MCF 10A (cell line): ENCODE measurements at regions of chr3 and their contacts with region 1.

Region 1: DNA sequence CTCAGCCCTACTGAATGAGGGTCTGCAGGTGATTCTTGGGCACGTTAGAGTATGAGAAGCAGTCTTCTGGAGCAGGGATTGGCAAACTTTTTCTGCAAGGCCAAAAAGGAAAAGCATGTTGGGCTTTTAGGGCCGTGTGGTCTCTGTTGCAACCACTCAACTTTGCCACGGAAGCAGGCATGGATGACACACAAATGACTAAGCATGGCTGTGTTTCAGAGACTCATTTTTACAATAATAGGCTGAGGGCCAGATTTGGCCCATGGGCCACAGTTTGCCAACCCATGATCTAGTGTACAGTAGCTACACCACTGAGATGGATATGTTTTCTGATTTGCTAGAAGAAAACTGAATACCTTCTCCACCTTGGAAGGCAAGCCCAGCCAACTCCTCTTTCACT is 66.1 kb upstream of the PRICKLE2 start:
- DNase-seq: peak; percentile 97
- H3K4me3 Mint-ChIP-seq: no peak overlapping the region
- H3K27ac Mint-ChIP-seq: peak overlapping the region; percentile 88
- H3K4me1 Mint-ChIP-seq: peaks cover 17% of the 10 kb centered on the region
- H3K27me3 Mint-ChIP-seq: no peaks in the 10 kb centered on the region
- CTCF ChIP-seq: no peak

Region 2: GRCh38 chr3:64187065-64187959 is 104.0 kb before region 1 on chr3:
- CTCF ChIA-PET with region 1: no interaction called
- POLR2A ChIA-PET with region 1: interaction called, 4 read pairs
- intact Hi-C with region 1: loop called (anchors 2 kb)
- DNase-seq: peak; percentile 93
- H3K4me3 Mint-ChIP-seq: peak overlapping the region; percentile 62
- H3K27ac Mint-ChIP-seq: peak overlapping the region; percentile 83
- H3K4me1 Mint-ChIP-seq: peaks cover 66% of the 10 kb centered on the region
- H3K27me3 Mint-ChIP-seq: no peaks in the 10 kb centered on the region
- CTCF ChIP-seq: no peak

Region 3: DNA sequence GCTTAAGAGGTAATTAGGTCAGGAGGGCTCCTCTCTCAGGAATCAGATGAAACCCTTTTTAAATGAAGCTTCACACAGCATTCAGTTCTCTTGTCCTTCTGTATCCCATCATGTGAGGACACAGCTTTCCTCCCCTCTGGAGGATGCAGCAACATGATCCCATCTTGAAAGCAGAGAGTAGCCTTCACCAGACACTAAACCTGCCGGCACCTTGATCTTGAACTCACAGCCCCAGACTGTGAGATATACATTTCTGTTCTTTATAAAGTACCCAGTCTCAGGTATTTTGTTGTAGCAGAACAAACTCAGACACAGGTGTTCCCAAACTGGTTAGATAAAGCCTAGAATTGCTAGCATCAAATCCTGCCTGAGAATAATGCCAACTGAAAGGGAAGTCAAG is 17.6 kb after region 1 on chr3:
- CTCF ChIA-PET with region 1: interaction called, 4 read pairs
- POLR2A ChIA-PET with region 1: interaction called, 11 read pairs
- intact Hi-C with region 1: no loop called
- DNase-seq: no peak
- H3K4me3 Mint-ChIP-seq: no peak overlapping the region
- H3K27ac Mint-ChIP-seq: no peak overlapping the region
- H3K4me1 Mint-ChIP-seq: no peaks in the 10 kb centered on the region
- H3K27me3 Mint-ChIP-seq: no peaks in the 10 kb centered on the region
- CTCF ChIP-seq: no peak

Region 4: DNA sequence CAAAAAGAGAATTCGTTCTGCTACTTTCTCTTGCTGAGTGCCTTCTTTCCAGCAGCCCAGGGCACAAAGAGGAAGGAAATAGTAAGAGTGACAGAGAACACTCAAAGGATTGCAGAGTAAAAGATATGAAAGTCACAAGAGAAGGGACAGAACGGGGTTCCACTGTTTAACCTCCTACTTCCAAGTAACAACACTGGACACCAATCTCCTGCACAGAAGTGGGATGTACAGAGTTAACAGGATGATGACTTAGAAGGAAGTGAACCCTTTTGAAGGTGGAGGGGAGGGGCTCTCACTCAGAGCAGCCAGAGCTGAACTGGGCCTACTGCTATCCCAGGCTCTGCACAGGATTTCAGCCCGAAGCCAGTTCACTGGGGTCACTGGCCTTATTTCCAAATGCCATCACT is 64.1 kb after region 1 on chr3:
- CTCF ChIA-PET with region 1: no interaction called
- POLR2A ChIA-PET with region 1: interaction called, 4 read pairs
- intact Hi-C with region 1: loop called (anchors 5 kb)
- DNase-seq: no peak
- H3K4me3 Mint-ChIP-seq: no peak overlapping the region
- H3K27ac Mint-ChIP-seq: no peak overlapping the region
- H3K4me1 Mint-ChIP-seq: peaks cover 41% of the 10 kb centered on the region
- H3K27me3 Mint-ChIP-seq: no peaks in the 10 kb centered on the region
- CTCF ChIP-seq: no peak